HCT116 (cell line): ENCODE measurements at regions of chr17 and their contacts with region 1.

Region 1: GRCh38 chr17:55527540-55528118 is 16.4 kb upstream of the SMIM36 start:
- DNase-seq: peak; percentile 42
- ATAC-seq: no peak
- H3K4me3 ChIP-seq: no peak overlapping the region
- H3K27ac ChIP-seq: no peak overlapping the region
- H3K4me1 ChIP-seq: no peaks in the 10 kb centered on the region
- H3K27me3 ChIP-seq: 0 out of 2 replicates have a peak, but pooled peaks cover 9% of the 10 kb centered on the region
- CTCF ChIP-seq: peak; percentile 55 to 58 (median 57); a peak in 5 of 6 replicates
- POLR2A ChIP-seq: no peak
- RAD21 ChIP-seq: peak; percentile 76

Region 2: GRCh38 chr17:55601874-55602364 is 74.3 kb after region 1 on chr17:
- CTCF ChIA-PET with region 1: interaction called, 52 read pairs
- POLR2A ChIA-PET with region 1: no interaction called
- RAD21 ChIA-PET with region 1: interaction called, 3 to 4 read pairs
- intact Hi-C with region 1: loop called (anchors 1 kb)
- DNase-seq: peak; percentile 41
- ATAC-seq: peak; percentile 83
- H3K4me3 ChIP-seq: no peak overlapping the region
- H3K27ac ChIP-seq: no peak overlapping the region
- H3K4me1 ChIP-seq: no peaks in the 10 kb centered on the region
- H3K27me3 ChIP-seq: peaks cover 17% of the 10 kb centered on the region
- CTCF ChIP-seq: peak; percentile 71 to 80 (median 78); a peak in 5 of 6 replicates
- POLR2A ChIP-seq: no peak
- RAD21 ChIP-seq: peak; percentile 67

Region 3: DNA sequence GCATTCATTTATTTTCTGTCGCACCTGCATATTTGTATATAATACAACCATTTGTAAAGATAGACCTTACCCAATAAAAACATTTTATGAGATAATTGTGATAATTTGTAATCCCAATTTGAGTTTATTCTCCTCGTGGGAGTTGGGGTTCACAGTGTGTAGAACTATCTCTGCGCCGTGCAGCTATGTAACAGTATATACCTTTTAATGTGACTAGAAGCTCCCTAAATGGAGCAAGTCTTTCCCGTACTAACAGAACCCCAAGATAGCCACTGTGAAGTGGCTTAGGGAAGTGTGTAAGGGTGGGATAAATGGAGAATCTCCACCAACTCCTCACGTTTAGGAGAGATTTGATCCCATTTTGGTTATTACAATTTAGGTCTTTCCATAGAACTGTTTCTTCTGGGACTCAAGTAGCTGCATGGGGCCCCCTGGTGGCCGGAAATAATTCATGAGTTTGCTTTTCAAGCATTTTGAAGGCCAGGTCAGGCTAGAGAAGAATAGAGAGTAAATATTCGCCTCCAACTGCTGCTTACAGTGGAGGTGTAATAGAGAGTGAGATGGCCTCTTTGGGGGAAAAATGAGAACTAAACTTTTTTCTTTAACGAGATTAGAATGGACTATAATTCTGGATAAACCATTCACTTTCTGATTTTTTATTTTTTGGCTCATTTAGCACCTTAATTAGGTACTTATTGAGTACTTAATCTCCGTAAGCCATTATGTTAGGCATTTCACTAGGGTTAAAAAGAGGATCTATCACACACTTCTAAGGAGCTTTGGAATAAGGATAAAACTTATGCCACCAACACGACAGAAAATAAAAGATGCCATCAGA is 190.5 kb after region 1 on chr17:
- CTCF ChIA-PET with region 1: interaction called, 7 read pairs
- POLR2A ChIA-PET with region 1: no interaction called
- RAD21 ChIA-PET with region 1: no interaction called
- intact Hi-C with region 1: loop called (anchors 1 kb)
- DNase-seq: peak; percentile 65
- ATAC-seq: peak; percentile 81
- H3K4me3 ChIP-seq: no peak overlapping the region
- H3K27ac ChIP-seq: no peak overlapping the region
- H3K4me1 ChIP-seq: no peaks in the 10 kb centered on the region
- H3K27me3 ChIP-seq: peaks cover 45% of the 10 kb centered on the region
- CTCF ChIP-seq: peak; percentile 60 to 98 (median 81); a peak in 5 of 6 replicates
- POLR2A ChIP-seq: no peak
- RAD21 ChIP-seq: peak; percentile 63

Region 4: DNA sequence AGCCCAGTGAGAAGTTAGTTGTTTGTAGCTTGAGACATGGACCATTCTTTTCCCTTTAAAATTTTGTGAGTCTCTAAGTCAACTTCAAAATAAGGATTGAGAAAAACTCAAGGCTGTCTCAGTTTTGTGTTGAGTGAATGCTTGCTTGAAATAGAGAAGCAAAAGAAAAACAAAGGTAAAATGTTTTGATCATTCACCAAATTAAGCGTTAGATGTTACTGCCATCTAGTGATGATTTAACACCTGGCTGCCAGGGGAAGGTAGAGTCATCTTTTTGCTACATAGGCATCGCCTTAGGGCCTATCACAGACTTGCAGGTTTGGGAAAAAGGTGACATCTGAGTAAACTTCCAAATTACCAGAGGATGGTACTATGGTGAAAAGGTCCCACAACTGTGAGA is 297.6 kb after region 1 on chr17:
- CTCF ChIA-PET with region 1: interaction called, 3 read pairs
- POLR2A ChIA-PET with region 1: no interaction called
- RAD21 ChIA-PET with region 1: no interaction called
- intact Hi-C with region 1: loop called (anchors 1 kb)
- DNase-seq: no peak
- ATAC-seq: peak; percentile 81
- H3K4me3 ChIP-seq: no peak overlapping the region
- H3K27ac ChIP-seq: no peak overlapping the region
- H3K4me1 ChIP-seq: no peaks in the 10 kb centered on the region
- H3K27me3 ChIP-seq: peaks cover 72% of the 10 kb centered on the region
- CTCF ChIP-seq: peak; percentile 46 to 70 (median 53); a peak in 5 of 6 replicates
- POLR2A ChIP-seq: no peak
- RAD21 ChIP-seq: peak; percentile 66

Region 5: DNA sequence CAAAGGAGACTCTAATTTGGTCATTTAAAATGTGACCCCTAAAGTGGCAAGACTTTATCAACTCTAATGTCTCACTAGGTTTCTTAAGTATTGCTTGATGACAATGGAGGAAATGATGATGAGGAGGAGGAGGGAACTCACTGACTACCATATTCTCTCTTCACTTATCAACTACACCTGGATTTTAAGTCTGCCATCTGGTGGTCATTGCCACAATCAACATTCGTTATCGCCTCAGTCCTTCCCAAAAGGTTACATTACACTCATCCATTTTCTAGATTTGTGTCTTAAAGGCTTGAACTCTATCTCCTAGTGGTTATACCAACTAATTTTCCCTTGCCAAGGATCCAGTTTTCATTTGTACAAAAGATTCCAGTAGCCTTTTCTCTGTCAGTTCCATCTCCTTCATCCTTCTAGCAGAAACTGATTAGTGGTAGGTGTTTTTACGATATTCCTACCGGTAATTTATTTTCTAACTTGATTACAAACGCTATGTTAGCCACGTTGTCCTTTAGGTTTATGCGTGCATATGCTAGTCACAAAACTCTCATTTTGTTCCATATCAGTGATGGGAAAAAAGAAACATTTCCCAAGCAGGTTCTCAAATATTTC is 951.3 kb after region 1 on chr17:
- CTCF ChIA-PET with region 1: no interaction called
- POLR2A ChIA-PET with region 1: no interaction called
- RAD21 ChIA-PET with region 1: no interaction called
- intact Hi-C with region 1: loop called (anchors 2 kb)
- DNase-seq: peak; percentile 58
- ATAC-seq: peak; percentile 94
- H3K4me3 ChIP-seq: no peak overlapping the region
- H3K27ac ChIP-seq: no peak overlapping the region
- H3K4me1 ChIP-seq: no peaks in the 10 kb centered on the region
- H3K27me3 ChIP-seq: peaks cover 30% of the 10 kb centered on the region
- CTCF ChIP-seq: peak; percentile 54 to 84 (median 71)
- POLR2A ChIP-seq: no peak
- RAD21 ChIP-seq: peak; percentile 56